ENCODE measurements at regions of chr2 and their contacts with region 1.

Region 1: DNA sequence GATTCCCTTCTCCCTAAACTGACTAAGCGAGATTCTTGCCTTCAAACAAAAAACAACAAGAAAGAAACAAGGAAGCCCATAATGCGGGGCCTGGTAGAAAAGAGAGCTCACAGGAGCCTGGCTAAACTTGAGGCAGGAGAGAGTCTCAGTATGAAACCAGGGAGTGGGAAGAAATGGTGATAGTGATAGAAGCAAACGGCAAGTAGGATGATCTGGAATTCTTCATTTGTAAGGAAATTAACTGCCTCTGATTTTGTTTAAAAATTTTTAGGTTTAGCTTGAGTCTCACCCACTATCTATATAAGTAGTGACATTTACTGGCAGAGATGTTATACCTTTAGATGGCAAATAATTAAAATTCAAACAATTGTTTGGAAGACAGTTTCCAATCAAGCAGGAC is 1356.5 kb upstream of the LRRTM1 start:
- DNase-seq: no peak
- H3K4me3 ChIP-seq: no peak overlapping the region
- H3K27ac ChIP-seq: no peak overlapping the region
- H3K4me1 ChIP-seq: no peaks in the 10 kb centered on the region
- H3K27me3 ChIP-seq: no peaks in the 10 kb centered on the region
- CTCF ChIP-seq: no peak
- EP300 ChIP-seq: no peak
- POLR2A ChIP-seq: no peak
- RAD21 ChIP-seq: no peak

Region 2: DNA sequence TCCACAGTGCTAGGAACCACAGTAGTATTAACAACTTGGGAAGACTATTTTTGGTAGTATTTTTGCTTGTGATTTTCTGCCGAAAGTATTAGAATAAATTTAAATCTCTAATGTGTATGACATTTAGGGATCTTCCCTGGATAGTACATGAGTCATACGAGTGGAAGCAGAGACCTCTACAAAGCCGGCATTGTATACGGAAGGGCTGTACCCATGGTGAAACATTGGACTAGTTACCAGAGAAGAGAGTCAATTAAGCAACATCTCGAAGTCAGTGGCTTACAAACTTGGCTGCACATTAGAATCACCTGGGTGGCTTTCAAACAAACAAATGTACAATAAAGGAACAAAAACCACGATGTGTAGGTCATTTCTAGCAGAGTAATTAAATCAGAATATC is 224.8 kb before region 1 on chr2:
- CTCF ChIA-PET with region 1: no interaction called
- POLR2A ChIA-PET with region 1: no interaction called
- DNase-seq: no peak
- H3K4me3 ChIP-seq: no peak overlapping the region
- H3K27ac ChIP-seq: no peak overlapping the region
- H3K4me1 ChIP-seq: peaks cover 0 to 5% (median 0%) of the 10 kb centered on the region in 4 experiments; a peak in 1 of 7 replicates
- H3K27me3 ChIP-seq: no peaks in the 10 kb centered on the region
- CTCF ChIP-seq: no peak
- EP300 ChIP-seq: no peak
- POLR2A ChIP-seq: no peak
- RAD21 ChIP-seq: no peak

Region 3: DNA sequence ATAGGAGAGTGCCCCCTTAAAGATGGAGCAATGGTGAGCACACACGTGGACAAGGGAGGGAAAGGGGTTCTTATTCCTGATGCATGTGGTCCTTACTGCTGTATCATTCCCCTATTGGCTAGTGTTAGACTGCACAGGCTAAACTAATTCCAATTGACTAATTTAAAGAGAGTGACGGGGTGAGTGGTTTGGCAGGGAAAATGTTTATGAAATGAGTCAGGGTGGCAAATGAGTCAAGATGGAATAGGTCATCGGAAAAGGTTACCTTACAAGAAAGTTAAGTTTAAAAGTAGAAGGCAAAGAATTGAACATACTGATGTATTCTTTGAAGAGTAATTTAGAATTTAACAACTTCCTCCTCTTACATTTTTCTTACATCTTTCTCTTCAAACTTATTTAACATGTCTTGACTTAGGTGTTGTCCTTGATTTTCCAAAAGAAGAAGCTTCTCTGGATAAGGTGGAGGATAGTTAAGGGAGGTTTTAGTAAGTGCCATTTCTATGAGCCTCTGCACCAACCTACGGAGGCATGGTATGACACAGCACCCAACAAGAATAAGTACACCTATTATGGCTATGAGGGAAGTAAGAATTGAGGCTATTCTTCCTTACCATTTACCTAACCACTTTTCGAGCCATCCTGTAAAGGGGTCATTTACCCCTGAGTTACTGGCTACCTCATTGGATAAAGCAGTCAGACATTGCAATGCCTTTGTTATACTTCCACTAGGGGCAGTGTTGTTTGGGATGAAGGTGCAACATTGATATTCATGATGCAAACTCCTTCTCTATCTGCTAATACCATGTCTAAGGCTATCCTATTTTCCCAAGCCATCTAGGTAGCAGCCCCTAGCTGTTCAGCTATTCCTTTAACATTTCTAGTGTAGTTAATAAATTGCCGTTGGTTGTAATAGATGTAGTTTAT is 10.8 kb before region 1 on chr2:
- CTCF ChIA-PET with region 1: interaction called, 10 read pairs
- POLR2A ChIA-PET with region 1: no interaction called
- DNase-seq: no peak
- H3K4me3 ChIP-seq: no peak overlapping the region
- H3K27ac ChIP-seq: no peak overlapping the region
- H3K4me1 ChIP-seq: peaks cover 0 to 7% (median 5%) of the 10 kb centered on the region in 4 experiments; a peak in 4 of 7 replicates
- H3K27me3 ChIP-seq: no peaks in the 10 kb centered on the region
- CTCF ChIP-seq: peak in 2 of 3 experiments; percentile 24 to 63; a peak in 1 of 4 replicates
- EP300 ChIP-seq: no peak
- POLR2A ChIP-seq: no peak
- RAD21 ChIP-seq: peak; percentile 23 to 43; a peak in 3 of 4 replicates

Measured in H1 (cell line).